ENCODE measurements at regions of chr1 and their contacts with region 1.

Region 1: DNA sequence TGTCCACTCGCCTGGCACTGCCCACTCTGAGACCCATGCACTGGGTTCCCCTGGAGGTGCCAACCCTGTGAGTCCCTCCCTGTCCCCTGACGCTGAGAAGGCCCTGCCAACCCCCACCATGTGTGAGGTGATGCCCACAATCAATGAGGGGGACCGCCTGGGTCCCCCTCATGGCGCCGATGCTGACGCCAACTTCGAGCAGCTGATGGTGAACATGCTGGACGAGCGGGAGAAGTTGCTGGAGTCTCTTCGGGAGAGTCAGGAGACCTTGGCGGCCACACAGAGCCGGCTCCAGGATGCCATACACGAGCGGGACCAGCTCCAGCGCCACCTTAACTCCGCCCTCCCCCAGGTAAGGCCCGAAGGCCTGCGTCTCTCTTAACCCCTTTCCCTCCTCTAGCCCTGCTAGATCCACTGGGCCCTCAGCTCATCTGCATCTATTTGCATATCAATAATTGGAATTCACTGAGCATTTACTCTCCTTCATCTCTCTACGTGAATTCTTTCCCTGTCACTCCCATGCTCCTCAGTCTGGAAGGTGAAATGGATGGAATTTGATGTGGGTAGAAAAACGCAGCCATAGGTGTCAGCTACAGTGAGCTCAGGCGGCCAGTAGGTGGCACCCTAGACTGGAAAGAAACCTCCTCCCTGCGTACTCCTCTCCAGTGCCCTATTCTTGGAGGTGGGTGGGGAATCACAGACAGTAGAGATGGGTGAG is 12.8 kb downstream of the PPFIA4 start:
- DNase-seq: peak in 1 of 2 donors; percentile 85
- H3K4me3 ChIP-seq: peak overlapping the region in 1 of 2 donors; percentile 19
- H3K27ac ChIP-seq: peak overlapping the region; percentile 87 to 92
- H3K4me1 ChIP-seq: peaks cover 16 to 23% of the 10 kb centered on the region in 2 donors
- H3K27me3 ChIP-seq: no peaks in the 10 kb centered on the region
- CTCF ChIP-seq: peak; percentile 83 to 88 (median 86)

Region 2: DNA sequence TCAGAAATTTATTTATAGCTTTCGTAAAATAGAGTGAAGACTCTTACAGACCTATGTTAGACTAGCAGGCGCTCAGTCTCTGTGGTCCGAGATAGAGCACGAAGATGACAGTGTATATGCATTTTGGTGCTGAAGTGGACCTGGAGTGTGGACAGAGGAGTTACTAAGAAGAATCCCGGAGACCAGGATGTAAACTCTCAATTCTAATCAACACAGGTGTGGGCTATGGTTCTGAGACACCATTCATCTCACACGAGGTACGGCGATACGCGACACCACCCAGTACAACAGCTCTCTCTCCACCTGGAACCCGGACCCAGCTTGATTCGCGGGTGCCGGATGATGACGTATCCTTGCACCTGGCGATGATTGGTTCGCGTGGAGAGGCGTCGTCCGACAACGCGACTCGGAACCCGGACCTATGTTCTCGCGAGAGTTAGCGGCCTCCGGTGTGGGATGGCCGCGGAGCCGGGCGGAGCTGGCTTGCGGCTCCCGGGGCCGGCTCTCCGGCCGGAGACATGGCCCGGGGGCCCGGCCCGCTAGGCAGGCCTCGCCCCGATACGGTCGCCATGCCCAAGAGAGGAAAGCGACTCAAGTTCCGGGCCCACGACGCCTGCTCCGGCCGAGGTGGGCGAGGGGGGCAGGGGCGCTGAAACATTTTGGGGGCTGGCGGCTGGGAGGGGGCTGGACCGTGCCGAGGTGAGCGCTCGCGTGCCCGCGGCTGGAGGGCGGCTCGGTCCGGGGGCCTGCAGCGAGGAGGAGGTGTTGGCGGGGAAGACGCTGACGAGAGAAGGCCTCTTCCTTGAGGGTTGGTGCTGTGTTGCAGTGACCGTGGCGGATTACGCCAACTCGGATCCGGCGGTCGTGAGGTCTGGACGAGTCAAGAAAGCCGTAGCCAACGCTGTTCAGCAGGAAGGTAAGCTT is 31.8 kb before region 1 on chr1 and contains the start of gene TMEM183A:
- intact Hi-C with region 1: loop called (anchors 1 kb)
- DNase-seq: peak; percentile 83 to 97
- H3K4me3 ChIP-seq: peak within 1 kb of the TSS; percentile 78 to 89
- H3K27ac ChIP-seq: peak within 1 kb of the TSS; percentile 79 to 95
- H3K4me1 ChIP-seq: peaks cover 6 to 14% of the 10 kb centered on the region in 2 donors
- H3K27me3 ChIP-seq: no peaks in the 10 kb centered on the region
- CTCF ChIP-seq: no peak
- total RNA-seq, gene TMEM183A: 44.6 TPM

Region 3: DNA sequence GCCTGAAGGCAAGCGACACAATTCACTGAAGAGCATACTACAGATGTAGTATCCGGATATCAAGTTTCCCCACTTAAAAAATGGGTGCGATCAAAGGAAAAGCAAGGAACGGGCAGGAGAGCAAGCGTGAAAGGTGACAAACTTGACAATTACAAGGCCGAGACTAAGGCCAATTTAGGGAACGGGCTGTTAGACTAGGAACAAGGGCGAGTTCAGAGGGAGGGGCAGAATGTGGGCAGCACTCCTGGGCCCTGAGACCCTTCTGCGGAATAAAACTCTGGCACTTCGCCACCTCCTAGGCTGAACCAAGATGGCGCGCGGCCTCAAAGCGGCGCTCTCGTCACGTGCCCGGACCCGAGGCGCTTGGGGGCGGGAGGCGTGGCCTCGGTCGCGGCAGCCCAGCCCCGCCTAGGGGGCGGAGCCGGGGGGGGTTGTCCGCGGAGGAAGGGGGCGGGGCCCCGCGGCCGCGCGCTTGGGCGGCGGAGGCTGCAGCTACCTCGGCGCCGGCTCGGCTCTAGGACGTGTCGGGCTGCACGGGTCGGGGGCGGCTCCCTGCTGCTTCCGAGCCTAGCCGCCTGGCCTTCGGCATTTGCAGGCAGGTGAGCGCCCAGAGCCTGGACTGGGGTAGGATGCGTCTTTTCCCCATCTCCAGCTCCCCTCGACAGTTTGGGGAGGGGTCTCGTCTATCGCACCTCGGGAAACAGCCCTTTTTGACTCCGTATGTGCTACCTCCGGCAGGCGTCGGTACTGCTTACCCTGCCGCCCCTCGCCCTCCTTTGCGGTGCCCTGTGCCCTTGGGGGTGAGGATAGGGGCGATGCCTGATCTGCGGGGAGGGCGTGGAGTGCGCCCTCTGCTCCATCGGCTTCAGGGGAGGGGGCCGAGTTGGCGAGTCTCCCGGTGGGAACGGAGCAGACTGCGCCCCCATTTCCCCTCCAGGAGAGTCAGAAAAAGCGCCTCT is 12.7 kb before region 1 on chr1 and contains the start of gene PPFIA4:
- intact Hi-C with region 1: loop called (anchors 1 kb)
- DNase-seq: peak in 1 of 2 donors; percentile 90
- H3K4me3 ChIP-seq: peak within 1 kb of the TSS; percentile 71 to 76
- H3K27ac ChIP-seq: peak within 1 kb of the TSS; percentile 42 to 66
- H3K4me1 ChIP-seq: peaks cover 4 to 20% of the 10 kb centered on the region in 2 donors
- H3K27me3 ChIP-seq: no peaks in the 10 kb centered on the region
- CTCF ChIP-seq: no peak
- total RNA-seq, gene PPFIA4: 22.2 TPM

Region 4: DNA sequence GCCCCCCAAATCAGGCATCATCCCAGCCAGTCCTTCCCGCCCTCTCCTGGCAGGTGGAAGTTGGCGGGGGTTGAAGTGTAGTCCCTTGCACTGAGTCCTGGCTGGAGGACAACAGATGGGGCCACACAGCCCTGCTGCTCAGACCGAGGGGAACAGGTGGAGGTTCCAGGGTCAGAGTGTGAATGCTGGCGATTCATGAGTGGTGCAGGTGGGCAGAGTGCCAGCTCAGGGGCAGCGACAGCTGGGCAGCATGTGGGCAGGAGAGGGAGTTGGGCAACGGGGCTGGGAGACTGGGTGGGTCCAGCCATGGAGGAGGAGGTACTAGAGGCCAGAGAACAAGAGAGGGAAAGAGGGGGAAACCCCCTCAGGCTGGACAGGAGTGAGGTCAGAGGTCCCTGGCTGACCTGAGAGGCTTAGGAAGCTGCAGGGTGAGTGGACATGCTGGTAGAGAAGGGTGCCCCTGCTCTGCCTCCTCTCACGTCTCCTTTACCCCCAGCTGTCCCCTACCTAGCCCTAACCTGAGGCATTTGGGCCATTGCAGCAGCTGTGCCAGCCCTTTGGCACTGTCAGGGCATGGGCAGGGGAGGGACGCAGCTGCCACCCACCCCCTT is 77.2 kb after region 1 on chr1:
- intact Hi-C with region 1: no loop called
- DNase-seq: no peak
- H3K4me3 ChIP-seq: no peak overlapping the region
- H3K27ac ChIP-seq: no peak overlapping the region
- H3K4me1 ChIP-seq: peaks cover 0 to 3% of the 10 kb centered on the region in 2 donors
- H3K27me3 ChIP-seq: peaks cover 6% of the 10 kb centered on the region
- CTCF ChIP-seq: no peak

Region 5: DNA sequence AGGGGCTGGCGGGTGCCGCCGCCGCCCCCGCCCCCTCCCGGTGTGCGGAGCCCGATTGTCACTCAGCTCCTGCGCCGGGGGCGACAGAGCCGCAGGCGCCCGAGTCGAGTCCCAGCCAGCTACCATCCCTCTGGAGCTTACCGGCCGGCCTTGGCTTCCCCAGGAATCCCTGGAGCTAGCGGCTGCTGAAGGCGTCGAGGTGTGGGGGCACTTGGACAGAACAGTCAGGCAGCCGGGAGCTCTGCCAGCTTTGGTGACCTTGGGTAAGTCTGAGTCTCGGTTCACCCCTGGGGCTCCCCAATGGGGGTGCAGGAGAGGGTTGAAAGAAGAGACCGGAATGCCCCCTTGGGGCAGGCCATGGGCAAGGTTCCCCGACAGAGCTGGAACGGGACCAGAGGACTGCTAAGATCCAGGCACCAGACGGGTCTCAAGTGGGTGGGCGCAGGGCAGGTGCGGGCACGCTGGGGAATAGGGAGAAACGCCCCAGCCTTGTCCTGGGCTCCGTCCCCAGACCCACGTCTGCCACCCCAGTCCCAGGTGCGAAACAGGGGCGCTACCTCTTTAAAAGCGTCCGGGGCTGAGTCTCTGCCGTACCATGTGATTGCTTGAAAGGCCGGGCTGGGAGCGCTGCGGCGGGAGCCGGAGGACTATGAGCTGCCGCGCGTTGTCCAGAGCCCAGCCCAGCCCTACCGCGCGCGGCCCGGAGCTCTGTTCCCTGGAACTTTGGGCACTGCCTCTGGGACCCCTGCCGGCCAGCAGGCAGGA is 88.8 kb after region 1 on chr1 and contains the start of gene ADORA1:
- intact Hi-C with region 1: loop called (anchors 5 kb)
- DNase-seq: peak in 1 of 2 donors; percentile 77
- H3K4me3 ChIP-seq: peak within 1 kb of the TSS; percentile 52 to 64
- H3K27ac ChIP-seq: no peak within 1 kb of the TSS
- H3K4me1 ChIP-seq: peaks cover 0 to 15% of the 10 kb centered on the region in 2 donors
- H3K27me3 ChIP-seq: no peaks in the 10 kb centered on the region
- CTCF ChIP-seq: no peak
- total RNA-seq, gene ADORA1: 2.0 TPM

Region 6: GRCh38 chr1:203172128-203173010 is 133.3 kb after region 1 on chr1:
- intact Hi-C with region 1: loop called (anchors 1 kb)
- DNase-seq: no peak
- H3K4me3 ChIP-seq: no peak overlapping the region
- H3K27ac ChIP-seq: no peak overlapping the region
- H3K4me1 ChIP-seq: no peaks in the 10 kb centered on the region
- H3K27me3 ChIP-seq: no peaks in the 10 kb centered on the region
- CTCF ChIP-seq: peak; percentile 57 to 68 (median 58)

Region 7: DNA sequence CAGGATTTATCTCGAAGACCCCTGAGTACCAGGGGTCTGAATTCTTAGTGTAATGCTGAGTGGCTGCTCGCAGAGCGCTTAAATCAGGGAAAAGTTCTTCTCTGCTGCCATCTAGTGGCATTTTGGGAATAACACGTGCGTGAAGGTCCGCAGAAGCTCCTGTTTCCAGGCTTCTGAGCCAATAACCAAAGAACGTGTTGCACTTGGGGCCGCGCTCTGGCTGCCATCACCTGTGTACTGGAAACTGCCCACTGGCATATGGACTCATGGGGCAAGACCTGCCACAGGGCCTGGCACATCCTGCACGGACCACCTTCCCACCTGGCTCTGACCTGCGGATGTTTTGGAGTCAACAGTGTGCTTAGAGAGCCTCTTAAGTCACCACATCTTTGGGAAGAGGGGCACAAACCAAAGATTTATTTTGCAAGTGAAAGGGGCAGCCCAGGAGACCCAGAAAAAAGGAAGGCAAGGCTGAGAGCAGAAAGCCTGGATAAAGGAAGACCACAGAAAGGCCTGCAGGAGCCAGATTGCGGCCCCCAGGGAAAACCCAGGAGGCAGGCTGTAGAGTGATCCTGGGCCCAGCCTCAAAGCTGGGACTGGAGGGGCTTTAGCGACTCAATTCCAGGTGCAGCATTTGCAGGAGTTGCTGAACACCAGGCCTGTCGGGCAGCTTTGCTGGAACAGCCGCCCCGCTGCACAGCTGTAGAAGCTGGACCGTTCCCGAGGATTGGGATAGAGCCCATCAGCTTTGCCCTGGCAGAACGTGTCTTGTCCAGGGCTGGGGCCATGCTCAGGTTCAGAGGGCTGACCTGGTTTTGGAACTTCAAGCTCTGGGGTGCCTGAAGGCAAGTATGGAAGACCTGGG is 177.5 kb after region 1 on chr1:
- intact Hi-C with region 1: loop called (anchors 1 kb)
- DNase-seq: peak in 1 of 2 donors; percentile 74
- H3K4me3 ChIP-seq: no peak overlapping the region
- H3K27ac ChIP-seq: no peak overlapping the region
- H3K4me1 ChIP-seq: no peaks in the 10 kb centered on the region
- H3K27me3 ChIP-seq: no peaks in the 10 kb centered on the region
- CTCF ChIP-seq: peak; percentile 75 to 88 (median 76)

Region 8: DNA sequence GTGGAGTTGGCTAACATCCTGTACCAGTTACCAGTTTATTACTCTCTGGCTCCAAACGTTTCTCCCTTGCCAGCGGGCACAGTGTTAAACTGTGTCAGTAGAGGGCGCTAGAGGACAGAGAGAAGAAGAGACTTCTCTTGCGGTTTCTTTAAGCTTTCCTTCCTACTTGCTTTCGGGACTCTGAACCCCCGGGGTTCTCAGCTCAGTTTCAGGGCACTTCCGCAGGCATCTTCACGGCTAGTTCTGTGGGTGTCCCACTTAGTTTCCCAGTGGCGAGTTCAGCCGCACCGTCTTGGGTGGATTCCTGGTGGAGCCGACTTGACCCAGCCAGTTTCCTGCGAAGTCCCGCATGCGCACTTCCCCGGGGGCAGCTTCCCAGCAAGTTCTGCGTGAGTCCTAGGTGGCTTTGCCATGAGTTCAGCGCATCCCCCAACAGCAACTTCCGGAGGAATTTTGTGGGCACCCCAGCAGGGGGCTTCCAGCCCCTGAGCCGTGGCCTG is 228.3 kb after region 1 on chr1:
- intact Hi-C with region 1: loop called (anchors 2 kb)
- DNase-seq: peak in 1 of 2 donors; percentile 94
- H3K4me3 ChIP-seq: peak overlapping the region; percentile 62 to 69
- H3K27ac ChIP-seq: peak overlapping the region; percentile 70 to 84
- H3K4me1 ChIP-seq: peaks cover 0 to 3% of the 10 kb centered on the region in 2 donors
- H3K27me3 ChIP-seq: no peaks in the 10 kb centered on the region
- CTCF ChIP-seq: peak; percentile 85 to 96 (median 91)

Measured in ascending aorta (tissue), 2 donors.